Posterior cingulate gyrus (tissue), 11 donors: ENCODE measurements at regions of chr19 and their contacts with region 1.

Region 1: DNA sequence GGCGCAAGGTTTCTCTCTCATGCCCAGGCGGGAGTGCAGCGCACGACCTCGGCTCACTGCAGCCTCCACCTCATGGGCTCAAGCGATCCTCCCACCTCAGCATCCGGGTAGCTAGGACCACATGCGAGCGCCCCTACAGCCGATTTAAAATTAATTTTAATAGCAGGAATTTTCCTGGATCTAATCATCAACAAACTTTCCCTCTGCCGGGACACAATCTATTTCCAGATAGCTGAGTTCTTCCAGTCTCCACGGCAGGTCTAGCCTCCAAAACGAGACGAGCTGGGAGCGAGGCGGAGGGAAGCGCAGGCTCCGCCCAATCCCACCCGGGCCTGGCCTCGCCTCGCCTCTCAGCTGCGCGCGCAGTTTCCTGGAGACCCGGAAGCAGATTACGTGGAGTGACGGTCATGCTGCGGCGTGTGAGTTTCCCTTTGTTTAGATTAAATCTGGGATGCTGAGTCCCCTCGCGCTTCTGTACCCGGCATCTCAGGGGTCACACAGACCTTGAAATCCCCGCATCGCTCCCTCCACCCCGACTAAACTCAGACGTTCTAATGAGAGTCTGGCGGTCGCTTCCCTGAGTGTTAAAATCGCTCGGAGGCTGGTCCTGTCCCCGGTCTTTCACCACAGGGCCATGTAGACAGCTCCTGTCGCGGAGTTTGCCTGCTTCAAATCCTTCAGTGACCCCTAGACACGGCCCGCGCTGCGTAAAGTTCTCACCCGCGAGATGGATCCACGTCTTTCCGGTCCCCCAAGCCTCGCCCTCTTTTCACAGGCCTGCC is at the start of gene ZNF880:
- DNase-seq: peak; percentile 84 to 99 (median 94)

Region 2: DNA sequence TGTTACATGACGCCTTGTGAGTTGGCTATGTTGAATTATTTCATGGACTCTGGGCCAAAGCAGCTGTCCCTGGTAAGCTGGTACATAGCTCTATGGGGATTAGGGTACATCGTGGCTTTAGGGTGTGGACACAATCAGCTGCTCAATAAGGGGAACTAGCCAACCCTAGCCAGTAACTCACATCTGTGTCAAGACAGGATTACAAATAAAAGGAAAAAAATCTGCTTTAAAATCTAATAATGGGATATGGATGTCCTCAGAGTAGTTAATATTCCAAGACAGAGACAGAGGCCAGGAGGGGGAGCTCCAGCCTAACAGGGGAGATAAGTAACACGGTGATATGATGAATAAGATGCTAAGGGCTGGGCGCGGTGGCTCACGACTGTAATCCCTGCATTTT is 121.5 kb before region 1 on chr19:
- intact Hi-C with region 1: no loop called
- DNase-seq: peak in 4 of 10 donors; percentile 14 to 42 (median 24)

Region 3: DNA sequence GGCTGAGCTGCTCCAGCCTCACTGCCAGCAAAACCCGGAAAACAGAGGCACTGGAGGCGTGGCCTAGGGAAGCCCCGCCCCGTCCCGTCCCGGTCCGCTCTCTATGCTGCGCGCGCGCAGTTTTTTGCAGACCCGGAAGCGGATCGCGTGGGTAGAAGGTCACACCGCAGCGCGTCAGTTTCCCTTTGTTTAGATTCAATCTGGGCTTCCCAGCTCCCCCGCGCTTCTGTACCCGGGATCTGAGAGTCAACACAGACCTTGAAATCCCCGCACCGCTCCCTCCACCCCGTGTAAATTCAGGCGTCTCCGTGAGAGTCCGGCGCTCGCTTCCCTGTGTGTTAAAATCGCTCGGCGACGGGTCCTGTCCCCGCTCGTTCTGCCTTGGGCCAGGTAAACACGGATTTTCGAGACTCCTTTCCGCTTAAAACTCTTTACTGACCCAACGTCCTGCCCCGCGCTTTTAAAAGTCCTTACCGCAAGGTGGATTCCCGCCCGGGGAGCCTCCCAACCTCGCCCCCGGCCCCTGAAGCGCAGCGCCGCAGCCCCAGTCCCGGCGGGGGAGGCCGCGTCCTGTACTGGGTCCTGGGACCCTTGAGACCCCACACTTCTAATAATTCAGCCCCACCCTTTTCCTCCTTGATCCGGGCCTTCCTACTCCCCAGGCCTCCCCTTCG is 33.5 kb before region 1 on chr19 and contains the start of gene ZNF610:
- intact Hi-C with region 1: loop called (anchors 1 kb)
- DNase-seq: peak; percentile 84 to 99 (median 91)

Region 4: DNA sequence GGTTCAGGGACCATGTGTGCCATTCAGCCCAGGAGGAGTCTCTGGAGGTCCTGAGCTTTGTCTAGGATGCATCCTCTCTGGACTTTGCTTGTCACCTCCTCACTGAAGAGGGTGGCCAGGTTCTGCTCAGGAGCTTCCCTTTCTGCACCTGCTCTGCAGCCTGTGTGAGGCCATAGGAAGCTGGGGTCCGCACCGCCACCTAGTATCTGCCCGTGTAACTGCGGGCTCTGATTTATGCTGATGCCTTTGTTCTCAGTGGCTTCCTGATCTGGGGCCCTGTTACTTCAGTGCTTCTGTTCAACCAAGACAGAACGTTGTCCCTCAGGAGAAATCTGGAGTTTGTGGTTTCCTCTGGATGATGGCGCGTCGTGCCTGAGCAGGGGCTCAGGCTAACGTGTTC is 18.2 kb before region 1 on chr19:
- intact Hi-C with region 1: no loop called
- DNase-seq: peak in 1 of 10 donors; percentile 27

Region 5: GRCh38 chr19:52397310-52398080 is 27.7 kb after region 1 on chr19 and contains the start of gene ZNF528:
- intact Hi-C with region 1: loop called (anchors 2 kb)
- DNase-seq: peak; percentile 88 to 98 (median 96)